MCF 10A (cell line): ENCODE measurements at regions of chr2 and their contacts with region 1.

Region 1: DNA sequence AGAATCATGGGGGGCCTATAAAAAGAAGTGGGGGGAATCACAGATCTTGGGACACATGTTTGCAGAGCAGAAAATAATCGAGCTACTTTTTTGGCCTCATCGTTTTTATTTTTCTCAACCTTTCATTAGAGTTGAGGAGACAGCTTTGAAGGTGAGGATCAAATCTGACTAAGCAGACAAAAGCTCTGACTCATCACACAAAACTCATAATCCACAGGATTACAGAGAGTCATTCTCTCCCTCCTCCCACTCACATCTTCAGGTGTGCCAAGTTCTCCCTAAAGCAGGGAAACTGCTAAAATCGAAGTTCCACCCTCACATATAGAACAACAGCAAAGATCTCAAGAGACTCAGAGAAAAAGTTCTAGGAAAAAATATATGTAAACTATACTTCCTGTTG is 15.6 kb downstream of the BAZ2B start:
- DNase-seq: peak; percentile 86
- H3K4me3 Mint-ChIP-seq: peak overlapping the region; percentile 2
- H3K27ac Mint-ChIP-seq: peak overlapping the region; percentile 20
- H3K4me1 Mint-ChIP-seq: peaks cover 11% of the 10 kb centered on the region
- H3K27me3 Mint-ChIP-seq: no peaks in the 10 kb centered on the region
- CTCF ChIP-seq: no peak

Region 2: GRCh38 chr2:159615140-159615951 is 14.6 kb after region 1 on chr2:
- CTCF ChIA-PET with region 1: interaction called, 5 read pairs
- POLR2A ChIA-PET with region 1: interaction called, 135 read pairs
- intact Hi-C with region 1: no loop called
- DNase-seq: peak; percentile 95
- H3K4me3 Mint-ChIP-seq: peak overlapping the region; percentile 99
- H3K27ac Mint-ChIP-seq: peak overlapping the region; percentile 98
- H3K4me1 Mint-ChIP-seq: peaks cover 15% of the 10 kb centered on the region
- H3K27me3 Mint-ChIP-seq: no peaks in the 10 kb centered on the region
- CTCF ChIP-seq: no peak